CD14-positive monocyte (primary cell): ENCODE measurements at regions of chr3 and their contacts with region 1.

Region 1: GRCh38 chr3:146218880-146219866 is 31.7 kb downstream of the PLSCR4 start:
- DNase-seq: peak; percentile 5 to 44 (median 20)
- H3K4me3 ChIP-seq: no peak overlapping the region
- H3K4me3 Mint-ChIP-seq: no peak overlapping the region
- H3K27ac ChIP-seq: no peak overlapping the region
- H3K27ac Mint-ChIP-seq: no peak overlapping the region
- H3K4me1 ChIP-seq: no peaks in the 10 kb centered on the region
- H3K4me1 Mint-ChIP-seq: no peaks in the 10 kb centered on the region
- H3K27me3 ChIP-seq: no peaks in the 10 kb centered on the region
- H3K27me3 Mint-ChIP-seq: no peaks in the 10 kb centered on the region
- CTCF ChIP-seq: peak; percentile 90

Region 2: DNA sequence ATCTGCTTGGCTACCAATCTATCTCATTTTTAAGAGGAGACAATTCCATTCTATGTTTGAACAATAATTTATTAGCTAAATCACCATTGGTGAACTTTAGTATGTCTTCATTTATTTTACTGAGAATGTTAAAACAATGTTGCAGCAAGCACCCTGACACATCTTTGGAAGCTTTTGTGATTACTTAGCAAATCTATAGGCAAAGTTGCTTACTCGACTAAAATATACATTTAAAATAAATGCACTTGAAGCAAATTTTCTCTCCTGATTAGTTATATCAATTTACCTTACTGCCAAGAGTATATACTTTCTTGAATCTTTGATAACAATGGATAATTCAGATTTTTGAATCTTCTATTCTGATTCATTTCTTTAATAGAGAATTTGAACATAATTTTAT is 355.0 kb after region 1 on chr3:
- intact Hi-C with region 1: loop called in 1 of 2 experiments (anchors 5 kb)
- DNase-seq: no peak
- H3K4me3 ChIP-seq: no peak overlapping the region
- H3K4me3 Mint-ChIP-seq: no peak overlapping the region
- H3K27ac ChIP-seq: no peak overlapping the region
- H3K27ac Mint-ChIP-seq: no peak overlapping the region
- H3K4me1 ChIP-seq: no peaks in the 10 kb centered on the region
- H3K4me1 Mint-ChIP-seq: peaks cover 2% of the 10 kb centered on the region
- H3K27me3 ChIP-seq: no peaks in the 10 kb centered on the region
- H3K27me3 Mint-ChIP-seq: peaks cover 0 to 1% (median 0%) of the 10 kb centered on the region in 3 donors
- CTCF ChIP-seq: no peak

Region 3: GRCh38 chr3:146589899-146590508 is 370.8 kb after region 1 on chr3:
- intact Hi-C with region 1: loop called in 1 of 2 experiments (anchors 10 kb)
- DNase-seq: peak in 1 of 3 donors; percentile 12
- H3K4me3 ChIP-seq: no peak overlapping the region
- H3K4me3 Mint-ChIP-seq: no peak overlapping the region
- H3K27ac ChIP-seq: no peak overlapping the region
- H3K27ac Mint-ChIP-seq: no peak overlapping the region
- H3K4me1 ChIP-seq: no peaks in the 10 kb centered on the region
- H3K4me1 Mint-ChIP-seq: no peaks in the 10 kb centered on the region
- H3K27me3 ChIP-seq: no peaks in the 10 kb centered on the region
- H3K27me3 Mint-ChIP-seq: no peaks in the 10 kb centered on the region
- CTCF ChIP-seq: peak; percentile 58